PC-3 (cell line): ENCODE measurements at regions of chr6 and their contacts with region 1.

Region 1: GRCh38 chr6:114342826-114343780 is at the start of gene HS3ST5:
- DNase-seq: peak; percentile 74
- ATAC-seq: peak; percentile 52
- H3K4me3 ChIP-seq: peak within 1 kb of the TSS; percentile 94
- H3K27ac ChIP-seq: peak within 1 kb of the TSS; percentile 41; the same call in 1 of the 2 replicates
- H3K4me1 ChIP-seq: peaks cover 44% of the 10 kb centered on the region
- H3K27me3 ChIP-seq: no peaks in the 10 kb centered on the region
- CTCF ChIP-seq: peak; percentile 55
- total RNA-seq, gene HS3ST5: 0.86 and 1.2 TPM in 2 replicates

Region 2: DNA sequence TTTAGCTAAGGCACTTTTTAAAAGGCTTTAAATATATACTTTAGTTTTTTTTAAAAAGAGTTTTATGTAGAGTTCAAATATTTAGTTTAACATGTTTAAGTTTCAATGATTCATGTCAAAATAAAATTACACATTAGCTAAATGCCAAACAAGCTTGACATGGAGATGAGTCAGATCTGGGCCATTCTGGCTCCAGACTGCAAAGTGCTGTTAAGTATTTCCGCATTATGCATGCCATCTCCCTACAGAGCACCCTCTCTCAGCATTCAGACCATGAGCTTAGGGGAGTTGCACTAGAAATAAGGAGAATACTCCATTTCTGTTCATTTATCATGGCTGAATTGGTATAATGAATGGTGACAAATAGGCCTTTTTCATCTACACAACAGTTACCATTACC is 21.2 kb after region 1 on chr6:
- CTCF ChIA-PET with region 1: interaction called, 8 read pairs
- POLR2A ChIA-PET with region 1: no interaction called
- intact Hi-C with region 1: loop called (anchors 2 kb)
- DNase-seq: peak; percentile 83
- ATAC-seq: peak; percentile 88
- H3K4me3 ChIP-seq: no peak overlapping the region
- H3K27ac ChIP-seq: peak overlapping the region; percentile 87
- H3K4me1 ChIP-seq: peaks cover 40% of the 10 kb centered on the region
- H3K27me3 ChIP-seq: no peaks in the 10 kb centered on the region
- CTCF ChIP-seq: no peak

Region 3: DNA sequence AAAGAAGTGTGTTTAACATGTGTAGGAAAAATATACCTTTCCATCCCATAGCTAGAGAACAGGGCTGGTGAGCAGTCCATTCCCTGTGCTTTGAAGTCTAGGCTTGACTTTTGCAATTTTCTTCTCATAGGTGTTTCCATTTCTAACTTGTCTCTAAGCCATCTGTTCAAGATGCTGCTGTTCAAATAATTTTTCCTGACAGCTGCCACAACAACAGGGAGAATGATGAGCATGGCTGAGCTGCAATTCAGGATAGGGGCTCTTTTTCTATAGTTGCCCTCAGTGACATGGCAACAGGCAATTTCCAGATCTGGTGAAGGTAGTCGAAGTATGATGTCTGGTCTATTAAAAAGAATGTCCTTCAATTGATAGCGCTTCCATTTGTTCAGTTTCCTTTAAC is 102.7 kb after region 1 on chr6:
- CTCF ChIA-PET with region 1: no interaction called
- POLR2A ChIA-PET with region 1: no interaction called
- intact Hi-C with region 1: no loop called
- DNase-seq: no peak
- ATAC-seq: no peak
- H3K4me3 ChIP-seq: no peak overlapping the region
- H3K27ac ChIP-seq: no peak overlapping the region
- H3K4me1 ChIP-seq: no peaks in the 10 kb centered on the region
- H3K27me3 ChIP-seq: no peaks in the 10 kb centered on the region
- CTCF ChIP-seq: no peak

Region 4: DNA sequence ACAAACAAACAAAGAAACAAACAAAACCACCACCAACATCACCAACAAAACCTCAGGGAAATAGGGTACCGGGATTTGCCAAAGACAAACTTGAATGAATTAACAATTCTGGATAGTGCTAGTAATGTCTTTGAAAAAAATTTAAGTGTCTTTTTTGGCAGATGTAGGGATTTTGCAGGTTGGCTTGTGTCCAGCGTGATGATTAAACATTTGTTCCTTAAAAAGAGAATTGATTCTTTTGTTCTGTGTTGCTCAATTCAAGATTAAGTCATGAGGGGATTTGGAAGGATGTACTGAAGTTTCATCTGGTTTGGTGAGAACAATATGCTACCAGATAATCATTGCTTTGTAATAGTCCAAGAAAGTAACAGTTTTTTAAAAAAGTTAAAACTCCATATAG is 124.8 kb after region 1 on chr6:
- CTCF ChIA-PET with region 1: interaction called, 4 read pairs
- POLR2A ChIA-PET with region 1: no interaction called
- intact Hi-C with region 1: loop called (anchors 10 kb)
- DNase-seq: peak; percentile 59
- ATAC-seq: no peak
- H3K4me3 ChIP-seq: no peak overlapping the region
- H3K27ac ChIP-seq: no peak overlapping the region; the same call in 1 of the 2 replicates
- H3K4me1 ChIP-seq: peaks cover 26% of the 10 kb centered on the region
- H3K27me3 ChIP-seq: no peaks in the 10 kb centered on the region
- CTCF ChIP-seq: no peak

Region 5: DNA sequence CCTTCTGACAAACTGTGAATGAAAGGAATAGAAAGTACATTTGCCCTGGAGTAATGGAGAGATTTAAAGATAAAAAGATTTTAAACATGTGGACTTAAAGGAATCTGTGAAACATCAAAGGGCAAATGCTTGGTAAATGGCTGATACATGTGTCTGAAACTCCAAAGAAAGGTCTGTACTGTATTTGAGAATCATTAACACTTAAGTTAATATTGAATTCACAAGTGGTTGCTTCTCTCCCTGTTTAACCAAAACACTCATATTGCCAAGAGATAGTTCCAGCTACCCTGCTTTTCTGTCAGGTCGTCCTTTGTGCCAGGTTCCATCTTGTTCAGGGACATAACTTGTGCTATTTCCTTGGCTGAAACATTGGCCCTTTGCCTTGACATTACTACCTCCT is 171.1 kb after region 1 on chr6:
- CTCF ChIA-PET with region 1: no interaction called
- POLR2A ChIA-PET with region 1: no interaction called
- intact Hi-C with region 1: loop called (anchors 2 kb)
- DNase-seq: no peak
- ATAC-seq: no peak
- H3K4me3 ChIP-seq: no peak overlapping the region
- H3K27ac ChIP-seq: no peak overlapping the region
- H3K4me1 ChIP-seq: no peaks in the 10 kb centered on the region
- H3K27me3 ChIP-seq: no peaks in the 10 kb centered on the region
- CTCF ChIP-seq: no peak

Region 6: GRCh38 chr6:114619621-114620200 is 276.6 kb after region 1 on chr6:
- CTCF ChIA-PET with region 1: no interaction called
- POLR2A ChIA-PET with region 1: no interaction called
- intact Hi-C with region 1: loop called (anchors 5 kb)
- DNase-seq: peak; percentile 70
- ATAC-seq: peak; percentile 89
- H3K4me3 ChIP-seq: no peak overlapping the region
- H3K27ac ChIP-seq: peak overlapping the region; percentile 51
- H3K4me1 ChIP-seq: peaks cover 14% of the 10 kb centered on the region
- H3K27me3 ChIP-seq: no peaks in the 10 kb centered on the region
- CTCF ChIP-seq: no peak

Region 7: GRCh38 chr6:114747987-114748630 is 405.0 kb after region 1 on chr6:
- CTCF ChIA-PET with region 1: no interaction called
- POLR2A ChIA-PET with region 1: no interaction called
- intact Hi-C with region 1: loop called (anchors 10 kb)
- DNase-seq: peak; percentile 53
- ATAC-seq: 0 out of 2 replicates have a peak, but pooled peaks have one; percentile 40
- H3K4me3 ChIP-seq: no peak overlapping the region
- H3K27ac ChIP-seq: no peak overlapping the region
- H3K4me1 ChIP-seq: no peaks in the 10 kb centered on the region
- H3K27me3 ChIP-seq: no peaks in the 10 kb centered on the region
- CTCF ChIP-seq: peak; percentile 79

Region 8: GRCh38 chr6:115896538-115897129 is 1553.5 kb after region 1 on chr6:
- CTCF ChIA-PET with region 1: no interaction called
- POLR2A ChIA-PET with region 1: interaction called, 4 read pairs
- intact Hi-C with region 1: loop called (anchors 10 kb)
- DNase-seq: peak; percentile 62
- ATAC-seq: 0 out of 2 replicates have a peak, but pooled peaks have one; percentile 24
- H3K4me3 ChIP-seq: no peak overlapping the region
- H3K27ac ChIP-seq: no peak overlapping the region
- H3K4me1 ChIP-seq: peaks cover 11% of the 10 kb centered on the region
- H3K27me3 ChIP-seq: no peaks in the 10 kb centered on the region
- CTCF ChIP-seq: peak; percentile 88